ENCODE measurements at regions of chr9 and their contacts with region 1.

Region 1: DNA sequence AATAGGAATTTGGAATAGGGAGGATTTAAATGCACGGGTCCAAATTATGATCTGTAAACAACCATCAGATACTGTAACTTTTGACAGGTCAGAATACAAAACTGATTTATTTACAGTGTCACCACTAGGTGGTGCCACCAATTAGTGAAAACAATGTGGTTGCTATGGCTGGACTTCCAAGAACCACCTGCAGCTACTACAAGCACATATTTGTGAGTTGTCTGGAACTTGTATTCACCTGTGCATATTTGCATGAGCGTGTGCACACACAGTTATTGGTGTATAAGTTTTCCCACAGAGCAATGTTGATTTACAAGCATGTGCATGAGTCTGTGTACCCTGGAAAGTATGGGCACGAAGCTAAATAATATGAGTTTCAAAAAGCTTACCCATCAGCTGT is 3.0 kb upstream of the HRCT1 start:
- DNase-seq: peak; percentile 49 to 69 (median 69)
- H3K4me3 ChIP-seq: no peak overlapping the region
- H3K27ac ChIP-seq: no peak overlapping the region
- H3K4me1 ChIP-seq: peaks cover 0 to 26% (median 13%) of the 10 kb centered on the region in 4 experiments
- H3K27me3 ChIP-seq: peaks cover 0 to 3% (median 0%) of the 10 kb centered on the region in 5 experiments

Region 2: DNA sequence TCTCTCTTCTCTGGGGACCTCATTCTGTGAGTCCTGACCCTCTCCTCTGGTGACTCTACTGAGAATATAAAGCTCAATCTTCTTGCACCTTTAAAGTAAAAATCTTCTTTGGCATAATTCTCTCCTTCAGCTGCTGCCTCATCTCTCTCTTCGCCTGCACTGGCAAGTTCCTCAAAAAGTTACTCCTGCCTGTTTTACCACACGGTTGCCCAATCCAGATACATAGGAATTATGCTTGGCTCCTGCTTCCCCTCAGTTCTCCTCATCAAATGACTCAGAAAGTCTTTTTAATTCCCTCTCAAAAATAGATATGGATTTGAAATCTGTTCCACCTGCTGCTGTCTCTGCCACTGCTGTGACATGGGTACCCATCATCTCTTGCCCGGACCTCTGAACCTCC is 11.4 kb before region 1 on chr9:
- CTCF ChIA-PET with region 1: interaction called, 10 read pairs
- POLR2A ChIA-PET with region 1: interaction called, 3 read pairs
- DNase-seq: peak in 2 of 3 donors; percentile 25 to 26
- H3K4me3 ChIP-seq: no peak overlapping the region
- H3K27ac ChIP-seq: no peak overlapping the region
- H3K4me1 ChIP-seq: peaks cover 0 to 8% (median 0%) of the 10 kb centered on the region in 4 experiments
- H3K27me3 ChIP-seq: peaks cover 0 to 10% (median 3%) of the 10 kb centered on the region in 5 experiments

Region 3: GRCh38 chr9:35923927-35924763 is 21.1 kb after region 1 on chr9:
- CTCF ChIA-PET with region 1: interaction called, 16 read pairs
- POLR2A ChIA-PET with region 1: no interaction called
- DNase-seq: peak in 2 of 3 donors; percentile 76 to 84
- H3K4me3 ChIP-seq: peak overlapping the region in 1 of 7 experiments; percentile 11
- H3K27ac ChIP-seq: peak overlapping the region in 1 of 2 experiments; percentile 74
- H3K4me1 ChIP-seq: peaks cover 6 to 39% (median 30%) of the 10 kb centered on the region in 4 experiments
- H3K27me3 ChIP-seq: no peaks in the 10 kb centered on the region

Region 4: GRCh38 chr9:35945341-35946018 is 42.4 kb after region 1 on chr9:
- CTCF ChIA-PET with region 1: interaction called, 104 read pairs
- POLR2A ChIA-PET with region 1: no interaction called
- DNase-seq: peak; percentile 36 to 61 (median 52)
- H3K4me3 ChIP-seq: peak overlapping the region in 2 of 7 experiments; percentile 20 to 32
- H3K27ac ChIP-seq: no peak overlapping the region
- H3K4me1 ChIP-seq: peaks cover 2 to 28% (median 16%) of the 10 kb centered on the region in 4 experiments
- H3K27me3 ChIP-seq: no peaks in the 10 kb centered on the region

Measured in common myeloid progenitor, CD34-positive (primary cell).